Breast epithelium (tissue), 4 donors: ENCODE measurements at regions of chr6 and their contacts with region 1.

Region 1: DNA sequence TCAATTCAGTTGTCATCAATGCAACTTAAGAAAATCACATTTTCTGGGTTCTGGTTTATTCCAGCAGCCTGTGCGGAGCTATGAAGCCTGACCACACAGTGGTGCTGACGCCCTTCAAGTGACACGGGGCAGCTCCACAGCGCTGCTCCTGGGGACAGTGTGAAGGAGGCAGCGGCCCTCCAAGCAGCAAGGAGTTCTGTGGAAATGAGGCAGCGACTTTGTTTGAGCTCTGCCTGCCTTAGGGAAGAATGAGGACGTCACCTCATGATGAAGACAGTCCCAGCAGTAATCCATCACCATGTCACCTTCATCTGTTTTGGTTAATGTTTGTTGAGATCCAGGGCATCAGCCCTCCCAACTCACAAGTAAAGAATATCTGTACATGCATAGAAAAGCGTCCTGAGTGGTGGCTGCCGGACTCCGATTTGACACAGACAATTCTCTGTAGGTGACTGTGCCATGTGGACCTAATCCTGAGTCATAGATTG is 168.5 kb upstream of the UST start:
- DNase-seq: peak; percentile 55 to 76
- H3K4me3 ChIP-seq: no peak overlapping the region
- H3K27ac ChIP-seq: no peak overlapping the region
- H3K4me1 ChIP-seq: no peaks in the 10 kb centered on the region
- H3K27me3 ChIP-seq: no peaks in the 10 kb centered on the region
- CTCF ChIP-seq: peak in 2 of 3 donors; percentile 71 to 78
- POLR2A ChIP-seq: no peak

Region 2: GRCh38 chr6:147624946-147625515 is 953.3 kb before region 1 on chr6:
- intact Hi-C with region 1: loop called (anchors 5 kb)
- DNase-seq: no peak
- H3K4me3 ChIP-seq: no peak overlapping the region
- H3K27ac ChIP-seq: no peak overlapping the region
- H3K4me1 ChIP-seq: no peaks in the 10 kb centered on the region
- H3K27me3 ChIP-seq: no peaks in the 10 kb centered on the region
- CTCF ChIP-seq: no peak
- POLR2A ChIP-seq: no peak

Region 3: GRCh38 chr6:148947621-148948444 is 369.5 kb after region 1 on chr6:
- intact Hi-C with region 1: loop called (anchors 10 kb)
- DNase-seq: peak; percentile 73 to 83
- H3K4me3 ChIP-seq: no peak overlapping the region
- H3K27ac ChIP-seq: no peak overlapping the region
- H3K4me1 ChIP-seq: no peaks in the 10 kb centered on the region
- H3K27me3 ChIP-seq: no peaks in the 10 kb centered on the region
- CTCF ChIP-seq: peak; percentile 78 to 86 (median 84)
- POLR2A ChIP-seq: no peak